ENCODE measurements at regions of chr14 and their contacts with region 1.

Region 1: GRCh38 chr14:23301288-23301968 is 1.2 kb downstream of the PPP1R3E start:
- DNase-seq: peak; percentile 98
- H3K4me3 ChIP-seq: peak overlapping the region; percentile 69 to 91
- H3K27ac ChIP-seq: peak overlapping the region; percentile 91 to 93
- H3K4me1 ChIP-seq: peaks cover 14 to 18% of the 10 kb centered on the region in 2 experiments; a peak in 3 of 4 replicates
- H3K27me3 ChIP-seq: no peaks in the 10 kb centered on the region
- CTCF ChIP-seq: peak; percentile 83
- EP300 ChIP-seq: 0 out of 4 replicates have a peak, but pooled peaks of 1 of the 2 experiments have one; percentile 4
- RAD21 ChIP-seq: 0 out of 2 replicates have a peak, but pooled peaks have one; percentile 8

Region 2: GRCh38 chr14:23137192-23137829 is 164.1 kb before region 1 on chr14:
- CTCF ChIA-PET with region 1: no interaction called
- POLR2A ChIA-PET with region 1: no interaction called
- DNase-seq: no peak
- H3K4me3 ChIP-seq: no peak overlapping the region
- H3K27ac ChIP-seq: no peak overlapping the region
- H3K4me1 ChIP-seq: no peaks in the 10 kb centered on the region; a peak in 1 of 4 replicates
- H3K27me3 ChIP-seq: no peaks in the 10 kb centered on the region; the same call in 1 of the 2 replicates
- CTCF ChIP-seq: no peak
- EP300 ChIP-seq: no peak
- RAD21 ChIP-seq: no peak

Region 3: GRCh38 chr14:23209651-23210423 is 91.6 kb before region 1 on chr14:
- CTCF ChIA-PET with region 1: no interaction called
- POLR2A ChIA-PET with region 1: no interaction called
- DNase-seq: no peak
- H3K4me3 ChIP-seq: no peak overlapping the region
- H3K27ac ChIP-seq: no peak overlapping the region
- H3K4me1 ChIP-seq: no peaks in the 10 kb centered on the region
- H3K27me3 ChIP-seq: peaks cover 45% of the 10 kb centered on the region; the same call in 1 of the 2 replicates
- CTCF ChIP-seq: no peak
- EP300 ChIP-seq: no peak
- RAD21 ChIP-seq: no peak

Region 4: GRCh38 chr14:23258256-23258655 is 43.2 kb before region 1 on chr14:
- CTCF ChIA-PET with region 1: interaction called, 20 read pairs
- POLR2A ChIA-PET with region 1: no interaction called
- DNase-seq: no peak
- H3K4me3 ChIP-seq: no peak overlapping the region
- H3K27ac ChIP-seq: no peak overlapping the region
- H3K4me1 ChIP-seq: no peaks in the 10 kb centered on the region
- H3K27me3 ChIP-seq: peaks cover 32% of the 10 kb centered on the region; the same call in 1 of the 2 replicates
- CTCF ChIP-seq: no peak
- EP300 ChIP-seq: no peak
- RAD21 ChIP-seq: no peak

Region 5: GRCh38 chr14:23281247-23281646 is 20.2 kb before region 1 on chr14:
- CTCF ChIA-PET with region 1: interaction called, 16 read pairs
- POLR2A ChIA-PET with region 1: interaction called, 4 read pairs
- DNase-seq: no peak
- H3K4me3 ChIP-seq: no peak overlapping the region
- H3K27ac ChIP-seq: no peak overlapping the region
- H3K4me1 ChIP-seq: peaks cover 7 to 8% of the 10 kb centered on the region in 2 experiments; a peak in 3 of 4 replicates
- H3K27me3 ChIP-seq: no peaks in the 10 kb centered on the region
- CTCF ChIP-seq: no peak
- EP300 ChIP-seq: no peak
- RAD21 ChIP-seq: no peak

Region 6: GRCh38 chr14:23286020-23286905 is 15.2 kb before region 1 on chr14 and contains the start of gene HOMEZ:
- CTCF ChIA-PET with region 1: interaction called, 26 read pairs
- POLR2A ChIA-PET with region 1: interaction called, 4 read pairs
- DNase-seq: peak; percentile 97
- H3K4me3 ChIP-seq: peak within 1 kb of the TSS; percentile 89
- H3K27ac ChIP-seq: peak within 1 kb of the TSS; percentile 86 to 92
- H3K4me1 ChIP-seq: peaks cover 8 to 10% of the 10 kb centered on the region in 2 experiments; a peak in 3 of 4 replicates
- H3K27me3 ChIP-seq: no peaks in the 10 kb centered on the region
- CTCF ChIP-seq: no peak
- EP300 ChIP-seq: no peak
- RAD21 ChIP-seq: no peak
- polyA plus RNA-seq, gene HOMEZ: 7.7 and 8.7 TPM in 2 replicates

Region 7: DNA sequence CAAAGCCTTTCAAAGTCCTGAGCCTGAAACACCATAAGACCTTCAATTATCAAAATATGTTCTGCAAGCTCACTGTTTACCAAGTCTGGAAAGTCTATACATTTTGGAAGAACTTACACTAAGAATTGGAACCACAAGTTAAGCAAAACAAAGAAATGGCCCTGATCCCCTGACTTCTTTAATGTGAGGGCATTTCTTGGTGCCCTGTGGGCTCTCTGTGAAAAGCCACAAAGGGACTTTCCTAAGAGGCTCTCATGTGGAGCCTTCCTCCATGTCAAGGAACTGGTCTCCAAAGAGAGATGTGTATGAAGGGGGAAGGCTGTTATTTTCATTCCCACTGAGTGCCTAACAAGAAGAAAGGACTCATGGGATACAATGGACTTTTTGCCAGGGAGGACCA is 120.2 kb after region 1 on chr14:
- CTCF ChIA-PET with region 1: no interaction called
- POLR2A ChIA-PET with region 1: no interaction called
- DNase-seq: no peak
- H3K4me3 ChIP-seq: no peak overlapping the region
- H3K27ac ChIP-seq: no peak overlapping the region
- H3K4me1 ChIP-seq: no peaks in the 10 kb centered on the region
- H3K27me3 ChIP-seq: peaks cover 16% of the 10 kb centered on the region
- CTCF ChIP-seq: no peak
- EP300 ChIP-seq: no peak
- RAD21 ChIP-seq: no peak

Measured in SK-N-SH (cell line).